ENCODE measurements at regions of chr5 and their contacts with region 1.

Region 1: DNA sequence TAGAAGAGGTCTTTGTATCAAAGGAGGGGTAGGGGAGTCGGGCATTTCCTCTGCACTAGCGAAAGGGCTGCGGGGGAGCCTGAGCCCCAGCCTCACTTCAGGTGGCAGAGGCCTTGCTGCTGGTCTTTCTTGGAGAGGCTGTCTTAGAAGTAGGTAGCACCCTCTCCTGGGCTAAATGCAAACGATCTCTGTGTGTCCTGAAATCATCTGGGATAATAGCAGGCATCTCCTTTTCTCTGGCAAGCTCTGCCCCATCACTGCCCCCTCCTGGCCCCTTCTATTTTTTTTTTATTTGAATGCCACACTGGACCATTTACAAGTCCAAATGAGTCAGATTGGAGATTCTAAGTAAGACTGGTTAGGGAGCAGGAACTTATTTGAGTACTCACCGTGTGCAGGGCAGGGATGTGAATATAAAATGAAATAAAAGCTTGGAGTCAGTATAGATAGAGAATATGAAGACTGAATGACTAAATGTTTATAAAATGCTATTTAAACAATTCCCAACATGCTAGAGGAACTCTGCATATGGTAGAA is 137.1 kb downstream of the FGF1 start:
- DNase-seq: peak; percentile 91
- H3K4me3 ChIP-seq: no peak overlapping the region
- H3K27ac ChIP-seq: no peak overlapping the region
- H3K27me3 ChIP-seq: no peaks in the 10 kb centered on the region
- CTCF ChIP-seq: peak; percentile 97

Region 2: GRCh38 chr5:142151436-142152383 is 397.1 kb before region 1 on chr5:
- CTCF ChIA-PET with region 1: interaction called, 91 read pairs
- POLR2A ChIA-PET with region 1: no interaction called
- DNase-seq: peak; percentile 74
- H3K4me3 ChIP-seq: no peak overlapping the region
- H3K27ac ChIP-seq: peak overlapping the region; percentile 47
- H3K27me3 ChIP-seq: no peaks in the 10 kb centered on the region
- CTCF ChIP-seq: peak; percentile 85

Region 3: DNA sequence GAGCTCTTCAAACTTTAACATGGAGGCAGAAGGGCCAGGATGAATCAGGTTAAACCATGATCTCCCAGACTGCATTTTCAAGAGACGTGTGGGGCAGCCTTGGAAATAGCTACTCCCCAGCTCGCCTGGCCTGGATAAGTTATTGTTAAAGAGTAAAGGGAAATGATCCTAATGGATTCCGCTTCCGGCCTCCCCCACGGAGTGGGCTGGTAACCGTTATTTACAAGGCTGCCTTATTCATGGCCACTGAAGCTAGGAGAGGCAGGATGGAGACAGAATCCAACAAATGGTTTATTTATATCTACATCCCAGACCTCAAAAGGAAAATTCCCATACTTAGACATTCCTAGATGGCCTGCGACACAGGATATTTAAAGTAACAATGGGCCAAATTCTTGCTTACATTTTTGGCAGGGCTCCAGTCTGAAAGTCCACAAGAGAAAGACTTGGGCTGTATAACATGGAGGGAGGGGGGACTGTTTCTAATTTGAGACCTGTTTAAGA is 251.8 kb before region 1 on chr5:
- CTCF ChIA-PET with region 1: interaction called, 11 read pairs
- POLR2A ChIA-PET with region 1: no interaction called
- DNase-seq: peak; percentile 54
- H3K4me3 ChIP-seq: no peak overlapping the region
- H3K27ac ChIP-seq: peak overlapping the region; percentile 81
- H3K27me3 ChIP-seq: no peaks in the 10 kb centered on the region
- CTCF ChIP-seq: no peak

Region 4: DNA sequence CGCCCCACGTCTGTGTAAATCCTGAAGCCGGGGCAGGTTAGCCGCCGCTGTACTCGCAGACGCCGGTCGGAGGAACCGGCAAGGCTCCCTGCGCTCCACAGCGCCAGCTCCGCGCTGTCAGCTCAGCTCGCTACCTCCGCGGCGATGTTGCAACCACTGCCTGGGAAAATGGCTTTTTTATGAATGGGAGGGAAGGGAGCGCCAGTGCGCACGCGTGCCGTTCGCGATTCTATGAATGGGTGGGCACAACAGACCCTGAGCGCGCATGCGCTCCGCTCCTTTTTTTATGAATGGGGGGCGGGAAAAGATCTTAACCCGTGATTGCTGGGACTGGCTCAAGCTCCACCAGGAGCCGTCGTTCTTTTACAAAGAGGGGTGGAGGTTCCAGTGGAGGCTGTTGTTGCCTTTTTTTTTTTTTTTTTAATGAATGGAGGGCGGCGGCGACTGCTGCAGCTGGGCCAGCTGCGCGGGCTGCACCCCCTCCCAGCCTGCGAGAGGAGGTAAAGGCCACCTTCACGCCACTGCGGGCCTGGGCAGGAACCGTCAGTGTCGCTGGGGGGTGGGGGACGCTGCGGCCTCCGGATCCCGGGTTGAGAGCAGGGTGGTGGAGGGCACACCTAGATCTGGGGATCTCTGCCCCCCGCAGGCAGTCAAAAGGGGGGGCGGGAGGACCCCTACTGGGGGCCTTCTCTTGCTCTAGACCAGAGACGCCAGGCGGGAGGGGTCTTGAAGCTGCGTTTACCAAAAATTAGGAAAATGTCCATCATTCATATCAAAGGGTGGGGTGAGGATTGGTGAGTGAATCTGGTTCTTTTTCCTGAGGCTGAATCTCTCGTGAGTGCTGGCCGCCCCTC is 223.7 kb before region 1 on chr5 and contains the start of gene SPRY4:
- CTCF ChIA-PET with region 1: interaction called, 18 read pairs
- POLR2A ChIA-PET with region 1: no interaction called
- DNase-seq: peak; percentile 97
- H3K4me3 ChIP-seq: peak within 1 kb of the TSS; percentile 88
- H3K27ac ChIP-seq: peak within 1 kb of the TSS; percentile 92
- H3K27me3 ChIP-seq: no peaks in the 10 kb centered on the region
- CTCF ChIP-seq: no peak
- polyA plus RNA-seq, gene SPRY4: 8.7 and 11.9 TPM in 2 replicates

Region 5: GRCh38 chr5:142356716-142357473 is 191.9 kb before region 1 on chr5:
- CTCF ChIA-PET with region 1: interaction called, 10 read pairs
- POLR2A ChIA-PET with region 1: no interaction called
- DNase-seq: peak; percentile 83
- H3K4me3 ChIP-seq: peak overlapping the region; percentile 63
- H3K27ac ChIP-seq: peak overlapping the region; percentile 95
- H3K27me3 ChIP-seq: no peaks in the 10 kb centered on the region
- CTCF ChIP-seq: no peak

Region 6: GRCh38 chr5:142386137-142387032 is 162.4 kb before region 1 on chr5:
- CTCF ChIA-PET with region 1: interaction called, 10 read pairs
- POLR2A ChIA-PET with region 1: no interaction called
- DNase-seq: no peak
- H3K4me3 ChIP-seq: no peak overlapping the region
- H3K27ac ChIP-seq: no peak overlapping the region
- H3K27me3 ChIP-seq: no peaks in the 10 kb centered on the region
- CTCF ChIP-seq: no peak

Region 7: GRCh38 chr5:142561486-142562097 is 12.8 kb after region 1 on chr5:
- CTCF ChIA-PET with region 1: interaction called, 12 read pairs
- POLR2A ChIA-PET with region 1: no interaction called
- DNase-seq: no peak
- H3K4me3 ChIP-seq: no peak overlapping the region
- H3K27ac ChIP-seq: no peak overlapping the region
- H3K27me3 ChIP-seq: no peaks in the 10 kb centered on the region
- CTCF ChIP-seq: no peak

Region 8: DNA sequence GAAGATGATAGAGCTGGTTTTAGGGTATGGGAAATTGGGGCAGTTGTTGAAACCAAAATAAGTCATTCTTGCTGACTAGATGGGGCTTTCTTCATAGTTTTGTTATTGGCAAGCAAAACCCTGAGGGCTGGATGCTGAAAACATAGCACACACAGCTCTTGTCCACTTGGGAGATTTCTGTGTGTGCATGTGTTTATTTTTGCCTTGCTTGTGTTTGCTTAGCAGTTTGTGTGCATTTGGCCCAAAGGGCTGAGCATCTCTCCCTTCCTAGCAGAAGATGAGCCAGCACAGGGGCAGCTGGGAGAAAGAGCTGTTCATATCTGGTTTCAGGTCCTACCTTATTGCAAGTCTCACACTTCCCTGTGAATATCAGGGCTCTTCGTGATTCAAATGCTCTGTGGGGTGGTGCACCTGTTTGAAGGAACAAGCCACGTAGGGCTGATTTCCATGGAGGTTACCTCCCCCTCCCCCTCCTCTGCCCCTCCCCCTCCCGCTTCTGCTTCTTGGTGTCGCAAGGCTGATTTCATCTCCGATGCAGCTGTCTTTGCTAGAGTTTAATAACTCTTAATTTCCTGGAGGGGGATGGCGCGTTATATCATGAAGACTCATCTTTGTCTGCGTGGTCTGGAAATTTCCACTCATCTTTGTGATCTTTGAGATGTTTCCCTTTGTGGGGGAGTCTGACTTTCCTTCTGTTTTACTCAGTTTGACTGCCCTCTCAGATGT is 517.9 kb after region 1 on chr5:
- CTCF ChIA-PET with region 1: no interaction called
- POLR2A ChIA-PET with region 1: no interaction called
- DNase-seq: no peak
- H3K4me3 ChIP-seq: no peak overlapping the region
- H3K27ac ChIP-seq: no peak overlapping the region
- H3K27me3 ChIP-seq: no peaks in the 10 kb centered on the region
- CTCF ChIP-seq: no peak